Activated B cell treated with CpG ODN at 0.5 μM for 24 hours (primary cell): ENCODE measurements at regions of chr1 and their contacts with region 1.

Region 1: DNA sequence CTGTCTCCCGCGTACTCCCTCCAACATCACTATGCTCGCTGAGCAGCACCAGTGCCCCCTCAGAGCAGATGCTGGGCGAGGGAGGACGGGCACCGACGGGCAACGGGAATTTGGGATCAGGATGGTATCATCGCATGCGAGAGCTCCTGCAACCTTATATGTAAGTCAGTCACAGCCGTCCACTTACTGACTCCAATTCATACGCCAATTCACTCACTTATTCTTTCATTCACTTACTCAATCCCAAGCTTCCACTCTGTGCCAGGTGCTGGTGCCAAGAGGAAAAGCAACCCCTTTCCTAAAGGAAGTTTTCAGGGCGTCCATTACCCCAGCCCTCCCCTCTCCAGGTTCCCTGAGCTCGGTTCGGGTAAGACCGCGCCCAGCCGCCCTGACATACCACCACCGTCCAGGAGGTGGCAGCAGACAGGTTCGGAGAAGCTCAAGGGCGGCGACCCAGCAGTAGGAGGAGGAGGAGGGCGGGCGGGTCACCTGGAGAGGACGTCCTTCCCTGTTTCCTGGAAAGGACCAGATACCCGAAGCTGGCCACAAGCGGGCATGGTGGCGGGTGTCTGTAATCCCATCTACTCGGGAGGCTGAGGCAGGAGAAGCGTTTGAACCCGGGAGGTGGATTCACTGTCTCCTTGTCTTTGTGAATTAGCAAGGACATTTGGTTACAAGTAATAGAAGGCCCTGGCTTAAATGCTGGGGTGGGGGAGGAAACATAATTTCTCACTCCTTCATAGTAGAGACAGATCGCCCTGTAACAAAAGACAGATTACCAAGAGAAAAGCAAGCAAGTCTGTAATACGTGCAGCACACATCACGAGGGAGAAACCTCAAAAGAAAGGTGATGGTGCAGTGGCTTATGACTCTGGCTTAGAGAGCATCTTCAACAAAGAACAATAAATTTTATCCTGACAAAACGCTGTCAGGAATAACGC is 7.6 kb upstream of the IL22RA1 start:
- DNase-seq: peak; percentile 89
- ATAC-seq: peak; percentile 98
- H3K4me3 Mint-ChIP-seq: peak overlapping the region; percentile 74
- H3K27ac Mint-ChIP-seq: peak overlapping the region; percentile 20
- H3K4me1 Mint-ChIP-seq: peaks cover 27% of the 10 kb centered on the region
- H3K27me3 Mint-ChIP-seq: peaks cover 3% of the 10 kb centered on the region
- CTCF ChIP-seq: no peak

Region 2: GRCh38 chr1:24070821-24071393 is 79.6 kb before region 1 on chr1:
- CTCF ChIA-PET with region 1: no interaction called
- POLR2A ChIA-PET with region 1: no interaction called
- intact Hi-C with region 1: loop called (anchors 2 kb)
- DNase-seq: peak; percentile 51
- ATAC-seq: peak; percentile 96
- H3K4me3 Mint-ChIP-seq: no peak overlapping the region
- H3K27ac Mint-ChIP-seq: no peak overlapping the region
- H3K4me1 Mint-ChIP-seq: no peaks in the 10 kb centered on the region
- H3K27me3 Mint-ChIP-seq: peaks cover 2% of the 10 kb centered on the region
- CTCF ChIP-seq: peak; percentile 85

Region 3: DNA sequence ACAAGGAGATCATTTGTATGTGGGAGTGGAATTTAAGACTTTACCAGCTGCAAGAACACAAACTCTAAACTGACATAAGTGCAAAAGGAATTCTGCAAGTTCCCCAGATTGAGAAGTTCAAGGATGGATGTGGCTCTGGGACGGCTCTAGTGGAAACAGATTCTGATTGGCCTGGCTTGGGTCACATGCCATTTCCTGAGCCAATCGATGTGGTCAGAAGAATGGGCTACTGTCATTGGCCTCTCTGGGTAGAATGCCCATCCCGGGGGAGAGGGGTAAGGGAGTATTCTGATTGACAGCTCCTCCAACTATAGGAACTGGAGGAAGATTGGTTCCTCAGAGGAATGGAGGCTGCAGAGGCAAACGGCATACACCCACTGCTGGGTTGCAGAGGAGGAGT is 42.5 kb after region 1 on chr1:
- CTCF ChIA-PET with region 1: interaction called, 135 read pairs
- POLR2A ChIA-PET with region 1: interaction called, 96 read pairs
- intact Hi-C with region 1: loop called (anchors 1 kb)
- DNase-seq: no peak
- ATAC-seq: no peak
- H3K4me3 Mint-ChIP-seq: no peak overlapping the region
- H3K27ac Mint-ChIP-seq: peak overlapping the region; percentile 98
- H3K4me1 Mint-ChIP-seq: peaks cover 71% of the 10 kb centered on the region
- H3K27me3 Mint-ChIP-seq: no peaks in the 10 kb centered on the region
- CTCF ChIP-seq: no peak

Region 4: GRCh38 chr1:24391882-24392603 is 241.5 kb after region 1 on chr1:
- CTCF ChIA-PET with region 1: interaction called, 243 read pairs
- POLR2A ChIA-PET with region 1: interaction called, 50 read pairs
- intact Hi-C with region 1: loop called (anchors 1 kb)
- DNase-seq: peak; percentile 56
- ATAC-seq: peak; percentile 77
- H3K4me3 Mint-ChIP-seq: peak overlapping the region; percentile 82
- H3K27ac Mint-ChIP-seq: peak overlapping the region; percentile 96
- H3K4me1 Mint-ChIP-seq: peaks cover 43% of the 10 kb centered on the region
- H3K27me3 Mint-ChIP-seq: no peaks in the 10 kb centered on the region
- CTCF ChIP-seq: no peak

Region 5: GRCh38 chr1:24642481-24643361 is 492.2 kb after region 1 on chr1 and contains the start of gene SRRM1:
- CTCF ChIA-PET with region 1: no interaction called
- POLR2A ChIA-PET with region 1: no interaction called
- intact Hi-C with region 1: loop called (anchors 2 kb)
- DNase-seq: peak; percentile 96
- ATAC-seq: peak; percentile 90
- H3K4me3 Mint-ChIP-seq: peak within 1 kb of the TSS; percentile 96
- H3K27ac Mint-ChIP-seq: peak within 1 kb of the TSS; percentile 99
- H3K4me1 Mint-ChIP-seq: peaks cover 38% of the 10 kb centered on the region
- H3K27me3 Mint-ChIP-seq: no peaks in the 10 kb centered on the region
- CTCF ChIP-seq: no peak
- total RNA-seq, gene SRRM1: 214 and 220 TPM in 2 replicates